ENCODE measurements at regions of chr19 and their contacts with region 1.

Region 1: GRCh38 chr19:13269348-13269747 is 119.1 kb downstream of the IER2 start:
- DNase-seq: no peak
- CTCF ChIP-seq: no peak

Region 2: GRCh38 chr19:12974301-12975220 is 294.8 kb before region 1 on chr19:
- in situ Hi-C with region 1: no loop called
- DNase-seq: peak; percentile 73
- CTCF ChIP-seq: no peak

Region 3: DNA sequence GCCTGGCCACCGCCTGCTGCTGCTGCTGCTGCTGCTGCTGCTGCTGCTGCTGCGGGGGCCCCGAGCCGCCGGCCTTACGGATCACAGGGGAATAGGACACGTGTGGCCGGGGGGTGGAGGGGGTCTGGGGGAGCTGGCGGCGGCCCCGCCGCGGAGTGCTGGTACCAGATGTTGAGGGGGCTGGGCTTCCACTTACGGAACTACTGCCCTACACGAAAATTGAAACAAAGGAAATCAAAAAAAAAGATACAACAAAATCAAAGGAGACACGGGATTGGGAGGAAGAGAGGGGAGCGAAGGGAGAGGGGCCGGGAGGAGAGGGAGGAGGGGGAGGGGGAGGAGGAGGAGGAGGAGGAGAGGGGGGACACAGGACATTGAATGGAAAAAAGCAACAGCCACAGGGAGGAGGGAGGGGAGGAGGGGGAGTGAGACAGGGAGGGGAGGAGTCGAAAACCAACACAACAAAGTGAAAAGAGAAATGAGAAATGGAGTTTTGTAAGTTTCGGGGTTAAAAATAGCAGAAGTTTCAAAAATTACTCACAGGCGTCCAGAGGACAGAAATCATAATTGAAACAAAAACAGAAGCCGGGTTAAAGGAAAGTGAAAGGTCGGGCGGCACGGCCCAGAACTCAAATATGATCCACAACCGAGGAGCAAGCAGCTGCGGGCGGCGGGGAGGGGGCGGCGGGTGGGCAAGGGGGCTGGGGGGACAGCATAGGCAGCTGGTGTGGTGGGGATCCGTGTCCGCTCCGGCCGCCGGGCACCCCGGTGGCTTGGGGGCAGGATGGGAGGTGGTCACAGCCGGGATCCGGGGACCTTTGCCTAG is 61.3 kb before region 1 on chr19:
- in situ Hi-C with region 1: loop called (anchors 5 kb)
- DNase-seq: peak; percentile 92
- CTCF ChIP-seq: no peak

Region 4: DNA sequence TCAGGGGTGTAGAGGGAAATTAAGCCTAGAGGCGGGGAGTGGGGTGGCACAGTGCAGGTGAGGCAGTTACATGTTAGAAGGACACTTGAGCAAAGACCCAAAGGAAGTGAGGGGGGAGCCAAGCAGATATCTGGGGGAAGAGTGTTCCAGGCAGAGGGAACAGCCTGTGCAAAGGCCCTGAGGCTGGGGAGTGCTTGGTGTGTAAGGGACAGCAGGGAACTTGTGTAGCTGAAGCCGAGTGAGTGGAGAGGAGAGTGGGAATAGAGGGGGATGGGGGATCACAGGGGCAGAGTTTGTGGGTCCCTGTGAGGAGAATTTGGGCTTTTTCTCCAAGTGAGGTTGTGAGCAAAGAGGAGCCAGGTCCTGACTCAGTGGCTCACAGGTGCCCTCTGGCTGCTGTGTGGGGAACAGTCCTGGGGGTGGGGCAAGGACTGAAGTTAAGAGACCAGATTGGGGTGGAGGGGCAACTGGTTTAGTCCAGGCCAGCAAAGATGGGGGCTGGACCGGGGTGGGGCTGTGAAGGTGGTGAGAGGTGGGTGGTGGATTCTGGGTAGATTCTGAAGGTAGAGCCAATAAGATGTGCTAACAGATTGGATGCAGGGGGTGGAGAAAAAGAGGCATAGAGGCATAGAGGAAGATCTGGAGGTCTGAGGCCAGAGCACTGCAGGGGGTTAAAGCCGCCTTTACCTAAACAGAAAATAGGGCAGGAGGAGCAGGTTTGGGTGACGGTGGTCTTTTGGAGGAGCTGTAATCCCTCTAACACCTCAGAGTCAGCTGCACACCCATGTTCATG is 161.6 kb after region 1 on chr19:
- in situ Hi-C with region 1: no loop called
- DNase-seq: peak; percentile 57
- CTCF ChIP-seq: peak; percentile 61

Measured in GM13976 (cell line).